ENCODE measurements at regions of chr2 and their contacts with region 1.

Region 1: DNA sequence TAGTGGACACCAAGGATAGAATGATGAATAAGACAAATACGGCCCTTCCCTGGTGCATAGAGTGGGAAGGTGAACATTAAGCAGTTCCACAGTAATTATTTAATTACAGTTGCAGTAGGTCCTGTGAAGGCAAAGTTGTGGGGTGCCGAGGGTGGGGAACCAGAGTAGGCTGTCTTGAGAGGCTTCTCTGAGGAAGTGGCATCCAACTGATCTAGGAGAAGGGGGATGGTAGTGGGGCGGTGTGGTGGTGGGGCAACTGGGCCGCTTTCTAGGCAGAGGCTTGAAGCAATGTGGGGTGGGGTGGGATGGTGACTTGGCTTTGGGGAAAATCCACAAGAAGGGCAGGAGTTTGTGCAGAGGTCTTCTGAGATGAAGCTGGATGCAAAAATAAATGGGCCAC is 11.7 kb downstream of the ACSL3 start:
- DNase-seq: no peak
- H3K27ac ChIP-seq: peak overlapping the region; percentile 45
- CTCF ChIP-seq: no peak

Region 2: DNA sequence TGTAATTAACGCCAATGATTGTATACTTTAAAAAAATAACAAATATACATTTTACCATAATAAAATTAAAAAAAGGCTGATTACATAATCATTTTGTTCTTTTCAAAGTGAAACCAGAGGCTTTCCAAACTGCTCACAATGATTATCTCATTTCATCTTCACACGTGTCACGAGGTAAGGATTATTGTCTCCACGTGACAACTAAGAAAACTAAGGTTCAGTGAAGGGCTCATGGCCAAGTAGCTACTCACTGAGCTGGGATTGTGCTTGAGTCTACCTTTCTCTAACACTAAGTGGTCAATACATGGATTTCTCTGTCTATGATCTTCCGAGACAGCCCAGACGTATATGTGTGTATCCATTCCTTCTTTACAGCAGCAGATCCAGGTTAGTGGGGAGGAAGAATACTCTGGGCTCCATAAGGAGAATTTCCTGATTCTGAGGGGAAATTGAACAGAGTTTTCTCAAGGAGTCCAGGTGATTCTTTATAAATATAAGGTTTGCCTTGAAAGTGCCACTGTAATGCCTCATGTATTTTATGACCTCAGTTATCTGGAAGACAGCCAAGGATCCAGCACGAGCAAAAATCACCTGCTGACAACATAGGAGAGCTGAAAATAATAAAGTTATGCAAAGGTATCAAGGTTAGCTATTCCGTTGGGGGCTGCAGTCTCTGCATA is 37.3 kb before region 1 on chr2:
- CTCF ChIA-PET with region 1: no interaction called
- POLR2A ChIA-PET with region 1: no interaction called
- DNase-seq: peak; percentile 38
- H3K27ac ChIP-seq: no peak overlapping the region
- CTCF ChIP-seq: no peak

Region 3: GRCh38 chr2:222916229-222917197 is 44.0 kb after region 1 on chr2:
- CTCF ChIA-PET with region 1: interaction called, 11 read pairs
- POLR2A ChIA-PET with region 1: no interaction called
- DNase-seq: no peak
- H3K27ac ChIP-seq: no peak overlapping the region
- CTCF ChIP-seq: no peak

Region 4: GRCh38 chr2:223383315-223383714 is 510.8 kb after region 1 on chr2:
- CTCF ChIA-PET with region 1: no interaction called
- POLR2A ChIA-PET with region 1: no interaction called
- DNase-seq: no peak
- H3K27ac ChIP-seq: no peak overlapping the region
- CTCF ChIP-seq: no peak